Colonic mucosa (tissue), 4 donors: ENCODE measurements at regions of chr13 and their contacts with region 1.

Region 1: GRCh38 chr13:41137951-41138350 is 5.3 kb upstream of the KBTBD6 start:
- DNase-seq: no peak
- H3K4me3 ChIP-seq: no peak overlapping the region
- H3K27ac ChIP-seq: no peak overlapping the region
- H3K4me1 ChIP-seq: no peaks in the 10 kb centered on the region
- H3K27me3 ChIP-seq: no peaks in the 10 kb centered on the region
- CTCF ChIP-seq: no peak

Region 2: GRCh38 chr13:41188584-41188983 is 50.6 kb after region 1 on chr13:
- intact Hi-C with region 1: loop called (anchors 5 kb)
- DNase-seq: no peak
- H3K4me3 ChIP-seq: no peak overlapping the region
- H3K27ac ChIP-seq: no peak overlapping the region
- H3K4me1 ChIP-seq: no peaks in the 10 kb centered on the region
- H3K27me3 ChIP-seq: no peaks in the 10 kb centered on the region
- CTCF ChIP-seq: no peak